ENCODE measurements at regions of chr10 and their contacts with region 1.

Region 1: DNA sequence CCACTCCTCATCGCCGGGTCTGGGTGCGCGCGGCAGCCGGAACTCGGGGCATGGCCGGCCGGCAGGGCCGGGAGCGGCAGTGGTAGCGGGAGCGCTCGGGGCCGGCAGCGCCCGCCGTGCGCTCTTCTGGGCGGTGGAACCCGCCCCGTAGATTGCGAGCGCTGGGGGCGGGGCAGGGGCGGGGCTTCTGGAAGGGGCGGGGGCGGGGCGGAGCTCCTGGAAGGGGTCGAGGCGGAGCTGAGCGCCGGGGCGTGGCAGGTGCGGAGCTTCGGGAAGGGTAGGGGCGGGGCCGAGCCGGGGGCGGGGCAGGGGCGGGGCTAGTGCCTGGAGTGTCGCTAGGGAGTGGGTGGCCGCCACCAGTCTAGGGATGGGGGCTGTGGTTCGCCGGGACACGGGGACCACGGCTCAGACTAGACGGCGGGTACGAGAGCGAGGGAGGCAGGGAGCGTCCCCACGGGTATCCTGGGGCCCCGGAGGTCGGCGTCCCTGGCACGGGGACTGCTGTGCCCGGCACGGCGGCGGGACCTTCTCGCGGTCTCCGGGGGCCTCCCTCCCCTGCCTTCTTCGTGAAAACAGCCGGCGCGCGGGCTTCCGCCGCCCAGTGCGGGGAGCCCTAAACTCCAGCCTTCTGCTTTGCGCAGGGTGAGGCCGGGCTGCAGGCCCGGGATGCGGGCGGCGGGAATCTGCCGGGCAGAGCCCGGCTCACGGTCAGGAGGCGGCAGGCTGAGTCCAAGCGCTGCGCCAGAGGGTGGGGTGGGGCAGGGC is at the start of gene STK32C:
- DNase-seq: peak; percentile 77 to 94 (median 90)
- H3K4me3 ChIP-seq: peak within 1 kb of the TSS; percentile 66 to 99 (median 92)
- H3K27ac ChIP-seq: peak within 1 kb of the TSS in 50 of 59 donors; percentile 26 to 88 (median 76)
- H3K27me3 ChIP-seq: no peaks in the 10 kb centered on the region
- CTCF ChIP-seq: peak in 14 of 56 donors; percentile 8 to 33 (median 18)
- total RNA-seq, gene STK32C: 30.1 to 78.4 (median 57.0) TPM

Region 2: GRCh38 chr10:132281915-132282666 is 25.9 kb before region 1 on chr10:
- intact Hi-C with region 1: loop called in 1 of 2 experiments (anchors 2 kb)
- DNase-seq: peak in 7 of 10 donors; percentile 35 to 79 (median 67)
- H3K4me3 ChIP-seq: peak overlapping the region in 4 of 59 donors; percentile 7 to 23 (median 12)
- H3K27ac ChIP-seq: peak overlapping the region in 19 of 59 donors; percentile 5 to 76 (median 38)
- H3K27me3 ChIP-seq: no peaks in the 10 kb centered on the region
- CTCF ChIP-seq: no peak

Region 3: GRCh38 chr10:132319853-132320669 is 12.1 kb after region 1 on chr10:
- intact Hi-C with region 1: no loop called
- DNase-seq: no peak
- H3K4me3 ChIP-seq: no peak overlapping the region
- H3K27ac ChIP-seq: no peak overlapping the region
- H3K27me3 ChIP-seq: no peaks in the 10 kb centered on the region
- CTCF ChIP-seq: no peak

Region 4: DNA sequence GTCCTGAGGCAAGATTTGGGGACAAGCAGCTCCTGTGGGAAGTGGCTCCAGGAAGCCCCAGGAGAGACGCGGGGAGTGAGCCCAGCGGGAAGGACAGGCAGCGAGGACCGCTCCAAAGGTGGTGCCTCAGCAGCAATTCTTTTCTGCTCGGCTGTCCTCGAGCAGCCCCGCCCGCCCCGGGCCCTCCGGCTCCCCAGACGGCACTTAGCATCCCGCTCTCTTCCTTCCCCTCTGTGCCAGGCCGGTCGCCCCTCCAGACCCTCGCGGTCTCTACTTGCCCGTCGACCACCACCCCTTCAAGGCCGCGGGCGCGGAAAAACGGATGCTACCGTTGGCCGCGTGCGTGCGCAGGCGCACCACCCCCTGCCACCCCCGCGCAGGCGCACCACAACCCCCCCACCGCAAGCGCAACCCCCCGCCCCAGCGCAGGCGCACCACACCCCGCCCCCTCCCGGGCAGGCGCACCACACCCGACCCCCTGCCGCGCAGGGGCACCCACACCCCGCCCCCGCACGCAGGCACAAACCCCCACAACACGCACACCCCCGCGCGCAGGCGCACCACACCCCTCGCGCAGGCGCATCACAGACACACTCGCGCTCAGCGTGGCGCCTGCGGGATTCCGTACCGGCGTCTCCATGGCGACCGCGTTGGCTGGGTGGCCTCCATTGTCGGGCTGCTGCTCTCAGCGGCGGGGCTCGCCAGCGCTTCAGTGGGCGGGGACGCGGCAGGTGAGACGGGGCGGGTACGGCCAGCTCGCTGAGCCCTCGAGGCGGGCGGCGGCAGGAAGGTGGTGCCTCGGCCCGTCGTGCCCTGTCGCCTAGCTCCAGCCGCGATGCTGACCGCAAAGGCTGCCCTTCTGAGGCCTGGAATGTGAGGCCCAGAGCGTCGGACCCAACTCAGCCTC is 23.8 kb after region 1 on chr10 and contains the start of gene LRRC27:
- intact Hi-C with region 1: loop called (anchors 2 kb)
- DNase-seq: peak; percentile 90 to 97 (median 94)
- H3K4me3 ChIP-seq: peak within 1 kb of the TSS; percentile 63 to 99 (median 91)
- H3K27ac ChIP-seq: peak within 1 kb of the TSS in 58 of 59 donors; percentile 5 to 92 (median 84)
- H3K27me3 ChIP-seq: no peaks in the 10 kb centered on the region
- CTCF ChIP-seq: peak in 11 of 56 donors; percentile 6 to 29 (median 17)
- total RNA-seq, gene LRRC27: 14.0 to 36.4 (median 25.3) TPM

Region 5: DNA sequence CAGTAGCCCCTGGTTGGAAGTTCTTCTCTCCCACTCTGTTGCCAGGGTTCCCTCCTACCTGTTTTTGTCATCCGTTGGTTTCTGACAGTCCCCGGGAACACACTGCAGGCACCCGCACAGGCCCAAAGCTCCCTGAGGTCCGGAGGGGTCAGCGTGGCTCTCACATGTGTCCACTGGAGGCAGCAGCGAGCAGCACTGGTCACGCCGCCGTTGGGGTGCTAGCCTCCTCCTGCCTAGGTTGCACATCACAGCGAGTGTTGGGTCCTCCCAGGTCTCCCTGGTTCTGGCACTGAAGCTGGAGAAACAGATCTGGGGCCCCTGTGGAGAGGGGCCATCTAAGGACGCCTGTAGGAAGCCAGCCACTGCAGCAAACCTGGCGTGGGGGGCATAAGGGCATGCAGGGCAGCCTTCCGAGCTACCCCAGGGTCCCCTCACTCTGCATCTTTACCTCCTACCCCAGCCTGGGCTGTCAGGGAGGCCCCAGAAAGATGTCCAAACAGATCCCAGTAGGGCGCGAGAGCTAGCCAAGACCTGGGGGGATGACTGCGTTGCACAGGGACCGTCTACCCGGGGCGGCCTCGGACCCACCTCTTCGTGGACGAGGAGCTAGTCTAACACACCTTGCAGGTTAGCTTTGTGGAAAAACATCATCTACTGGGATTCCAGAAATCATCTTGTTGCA is 52.9 kb after region 1 on chr10:
- intact Hi-C with region 1: no loop called
- DNase-seq: peak in 4 of 10 donors; percentile 19 to 45 (median 38)
- H3K4me3 ChIP-seq: no peak overlapping the region
- H3K27ac ChIP-seq: peak overlapping the region in 26 of 59 donors; percentile 2 to 74 (median 47)
- H3K27me3 ChIP-seq: no peaks in the 10 kb centered on the region
- CTCF ChIP-seq: peak in 52 of 56 donors; percentile 22 to 60 (median 42)

Measured in dorsolateral prefrontal cortex (tissue), 120 donors.